ENCODE measurements at regions of chr19 and their contacts with region 1.

Region 1: DNA sequence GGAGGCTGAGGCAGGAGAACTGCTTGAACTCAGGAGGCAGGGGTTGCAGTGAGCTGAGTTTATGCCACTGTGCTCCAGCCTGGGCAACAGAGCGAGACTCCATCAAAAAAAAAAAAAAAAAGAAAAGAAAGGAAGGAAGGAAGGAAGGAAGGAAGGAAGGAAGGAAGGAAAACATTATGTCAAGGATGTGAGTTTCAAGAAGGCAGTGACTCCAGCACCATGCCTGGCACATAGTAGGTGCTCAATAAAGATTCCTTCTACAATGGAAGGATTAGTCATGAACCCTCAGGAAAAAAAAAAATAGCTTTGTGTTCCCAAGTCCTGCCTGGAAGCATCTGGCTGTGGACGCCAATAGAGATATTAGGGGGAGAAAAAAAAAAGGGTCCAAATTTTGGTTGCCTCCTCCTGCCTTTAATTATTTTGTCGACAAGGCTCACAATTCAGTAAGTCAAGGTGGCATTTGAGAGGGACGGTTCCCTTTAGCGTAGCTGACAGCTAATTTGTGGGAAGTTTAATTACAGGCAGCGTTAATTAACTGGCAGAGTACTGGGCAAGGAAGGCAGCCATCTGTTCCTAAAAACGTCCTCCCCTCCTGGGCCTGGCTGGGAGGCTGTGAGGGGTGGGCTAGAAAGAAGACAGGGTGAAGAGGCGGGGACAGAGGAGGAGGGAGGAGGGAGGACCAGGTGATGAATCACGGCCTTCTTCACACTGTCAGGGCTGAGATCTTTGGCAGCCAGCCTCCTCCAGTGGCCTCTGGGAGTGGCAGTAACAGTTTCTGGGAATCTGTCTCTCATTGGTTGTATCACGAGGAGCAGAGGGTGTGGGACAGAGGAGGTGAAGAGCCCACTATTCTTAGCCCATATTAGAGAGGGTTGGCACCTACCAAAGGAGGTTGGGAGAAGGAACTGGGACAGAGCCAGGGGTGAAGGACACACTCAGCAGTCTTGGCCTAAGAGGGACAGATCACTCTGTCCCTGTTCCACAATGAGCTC is 9.8 kb upstream of the ZNRF4 start:
- DNase-seq: no peak
- ATAC-seq: no peak
- H3K4me3 ChIP-seq: no peak overlapping the region
- H3K27ac ChIP-seq: no peak overlapping the region
- H3K4me1 ChIP-seq: no peaks in the 10 kb centered on the region
- H3K27me3 ChIP-seq: no peaks in the 10 kb centered on the region
- CTCF ChIP-seq: no peak

Region 2: GRCh38 chr19:5503598-5503997 is 58.2 kb after region 1 on chr19:
- CTCF ChIA-PET with region 1: interaction called, 10 read pairs
- POLR2A ChIA-PET with region 1: no interaction called
- in situ Hi-C with region 1: no loop called
- intact Hi-C with region 1: no loop called
- DNase-seq: no peak
- ATAC-seq: no peak
- H3K4me3 ChIP-seq: no peak overlapping the region
- H3K27ac ChIP-seq: no peak overlapping the region
- H3K4me1 ChIP-seq: no peaks in the 10 kb centered on the region
- H3K27me3 ChIP-seq: no peaks in the 10 kb centered on the region
- CTCF ChIP-seq: no peak; the same call in 1 of the 2 replicates

Measured in Panc1 (cell line).